Activated CD8-positive, alpha-beta T cell treated with anti-CD3 and anti-CD28 coated beads, Interleukin-2, amount 10 ng/mL, durations not matched to agents 7 days and 5 days (primary cell): ENCODE measurements at regions of chr17 and their contacts with region 1.

Region 1: DNA sequence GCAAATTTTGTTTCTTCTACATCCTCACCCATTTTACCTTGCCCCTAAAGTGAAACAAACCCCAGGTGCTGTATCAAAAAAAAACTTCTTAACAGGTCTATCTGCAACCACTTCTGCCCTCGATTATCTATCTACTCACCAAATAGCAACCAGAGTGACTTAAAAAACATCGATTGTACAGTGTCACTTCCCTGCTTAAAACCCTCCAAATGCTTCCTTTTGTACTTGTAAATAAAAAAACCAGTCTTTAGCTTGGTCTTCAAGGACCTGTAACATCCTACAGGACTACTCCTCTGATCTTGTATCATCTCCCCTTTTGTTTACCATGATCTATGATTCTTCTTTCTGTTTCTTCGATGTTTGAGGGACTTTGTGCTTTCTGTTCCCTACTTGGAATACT is 82.7 kb upstream of the CORO6 start:
- DNase-seq: no peak
- ATAC-seq: no peak
- H3K4me3 Mint-ChIP-seq: peak overlapping the region; percentile 54
- H3K27ac Mint-ChIP-seq: peak overlapping the region; percentile 91
- H3K4me1 Mint-ChIP-seq: peaks cover 42% of the 10 kb centered on the region
- H3K27me3 Mint-ChIP-seq: no peaks in the 10 kb centered on the region

Region 2: DNA sequence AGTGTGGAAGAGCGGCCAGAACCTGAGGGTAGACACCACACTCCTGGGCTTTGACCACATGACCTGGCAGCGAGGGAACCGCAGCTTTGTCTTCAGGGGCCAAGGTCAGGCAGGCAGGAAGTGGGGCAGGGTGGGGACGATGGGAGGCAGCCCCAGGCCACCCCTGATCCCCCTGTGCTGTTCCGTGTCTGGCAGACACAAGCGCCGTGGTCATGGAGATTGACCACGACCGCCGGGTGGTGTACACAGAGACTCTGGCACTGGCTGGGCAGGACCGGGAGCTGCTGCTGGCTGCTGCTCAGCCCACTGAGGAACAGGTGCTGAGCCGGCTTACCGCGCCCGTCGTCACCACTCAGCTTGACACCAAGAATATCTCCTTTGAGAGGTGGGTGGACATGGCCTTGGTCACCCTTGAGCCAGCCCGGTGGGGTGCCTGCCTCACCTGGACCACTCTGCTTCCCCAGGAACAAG is 96.5 kb before region 1 on chr17:
- CTCF ChIA-PET with region 1: no interaction called
- POLR2A ChIA-PET with region 1: no interaction called
- DNase-seq: no peak
- ATAC-seq: no peak
- H3K4me3 Mint-ChIP-seq: no peak overlapping the region
- H3K27ac Mint-ChIP-seq: no peak overlapping the region
- H3K4me1 Mint-ChIP-seq: peaks cover 4% of the 10 kb centered on the region
- H3K27me3 Mint-ChIP-seq: no peaks in the 10 kb centered on the region

Region 3: GRCh38 chr17:29653995-29654714 is 51.2 kb before region 1 on chr17:
- CTCF ChIA-PET with region 1: no interaction called
- POLR2A ChIA-PET with region 1: no interaction called
- DNase-seq: no peak
- ATAC-seq: no peak
- H3K4me3 Mint-ChIP-seq: no peak overlapping the region
- H3K27ac Mint-ChIP-seq: no peak overlapping the region
- H3K4me1 Mint-ChIP-seq: peaks cover 5% of the 10 kb centered on the region
- H3K27me3 Mint-ChIP-seq: no peaks in the 10 kb centered on the region

Region 4: GRCh38 chr17:29722411-29723198 is 17.2 kb after region 1 on chr17:
- CTCF ChIA-PET with region 1: interaction called, 6 read pairs
- POLR2A ChIA-PET with region 1: interaction called, 23 read pairs
- DNase-seq: peak; percentile 41
- ATAC-seq: peak; percentile 73
- H3K4me3 Mint-ChIP-seq: peak overlapping the region; percentile 3
- H3K27ac Mint-ChIP-seq: peak overlapping the region; percentile 20
- H3K4me1 Mint-ChIP-seq: peaks cover 55% of the 10 kb centered on the region
- H3K27me3 Mint-ChIP-seq: no peaks in the 10 kb centered on the region

Region 5: DNA sequence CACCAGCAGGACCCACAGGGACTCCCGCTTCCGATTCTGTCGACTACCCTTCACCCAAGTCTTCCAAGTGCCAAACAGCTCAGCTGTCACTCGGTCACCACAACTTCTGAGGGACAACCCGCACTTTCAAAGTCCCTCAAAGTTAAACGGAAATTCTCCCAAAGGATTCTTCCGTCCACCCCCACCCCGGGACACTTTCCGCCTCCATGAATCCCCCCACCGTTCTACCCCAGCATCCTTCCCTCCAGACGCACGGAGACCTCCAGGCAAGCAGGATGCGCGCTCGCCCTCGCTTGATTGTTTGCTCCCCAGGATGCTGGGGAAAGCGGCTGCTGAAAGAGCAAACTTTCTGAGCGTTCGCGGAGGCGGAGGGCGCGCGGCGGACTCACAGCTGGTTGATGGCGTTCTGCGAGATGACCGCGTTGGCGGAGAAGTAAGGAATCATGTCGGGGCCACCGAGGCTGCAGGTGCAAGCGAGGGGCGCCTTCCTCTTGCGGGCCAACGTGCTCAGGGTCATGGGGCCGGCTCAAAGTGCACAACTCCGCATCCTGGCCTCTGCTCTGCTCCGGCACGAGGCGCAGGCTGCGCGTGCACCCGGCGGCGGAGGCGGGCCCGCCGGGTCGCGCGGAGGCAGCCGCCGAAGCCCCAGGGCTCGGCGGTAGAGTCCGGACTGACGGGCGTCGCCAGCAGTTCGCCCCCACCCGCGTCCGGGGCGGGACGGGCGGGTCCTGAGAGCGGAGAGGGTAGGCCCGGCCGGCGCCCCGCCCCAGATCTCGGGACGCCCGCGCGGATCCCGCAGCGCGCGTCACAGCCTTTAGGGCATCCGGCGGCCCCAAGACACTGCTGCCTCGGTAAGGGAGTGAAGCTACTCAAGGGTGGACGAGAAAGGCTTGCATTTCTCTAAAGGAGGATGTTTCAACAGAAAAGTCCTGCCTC is 55.6 kb after region 1 on chr17:
- CTCF ChIA-PET with region 1: interaction called, 3 read pairs
- POLR2A ChIA-PET with region 1: interaction called, 36 read pairs
- DNase-seq: peak; percentile 94
- ATAC-seq: peak; percentile 92
- H3K4me3 Mint-ChIP-seq: peak overlapping the region; percentile 87
- H3K27ac Mint-ChIP-seq: peak overlapping the region; percentile 99
- H3K4me1 Mint-ChIP-seq: peaks cover 44% of the 10 kb centered on the region
- H3K27me3 Mint-ChIP-seq: no peaks in the 10 kb centered on the region

Region 6: GRCh38 chr17:29802246-29802645 is 96.9 kb after region 1 on chr17:
- CTCF ChIA-PET with region 1: no interaction called
- POLR2A ChIA-PET with region 1: no interaction called
- DNase-seq: no peak
- ATAC-seq: no peak
- H3K4me3 Mint-ChIP-seq: no peak overlapping the region
- H3K27ac Mint-ChIP-seq: no peak overlapping the region
- H3K4me1 Mint-ChIP-seq: no peaks in the 10 kb centered on the region
- H3K27me3 Mint-ChIP-seq: no peaks in the 10 kb centered on the region